Activated CD4-positive, alpha-beta T cell treated with anti-CD3 and anti-CD28 coated beads, Interleukin-2, amount 10 ng/mL, durations not matched to agents 24 days and 14 days (primary cell): ENCODE measurements at regions of chr1 and their contacts with region 1.

Region 1: DNA sequence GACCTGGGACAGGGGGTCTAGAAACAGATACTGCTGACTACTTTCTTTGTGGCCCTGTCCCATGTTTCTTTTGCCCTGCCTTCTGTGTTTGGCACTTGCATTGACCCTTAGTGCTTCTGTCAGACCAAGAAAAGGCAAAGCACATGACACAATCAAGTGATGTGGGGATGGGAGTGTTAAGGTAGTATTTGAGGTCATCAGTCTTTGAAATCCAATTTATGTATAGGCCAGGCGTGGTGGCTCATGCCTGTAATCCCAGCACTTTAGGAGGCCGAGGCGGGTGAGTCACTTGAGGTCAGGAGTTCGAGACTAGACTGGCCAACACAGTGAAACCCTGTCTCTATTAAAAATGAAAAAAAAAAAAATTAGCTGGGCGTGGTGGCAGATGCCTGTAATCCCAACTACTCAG is 26.0 kb downstream of the SERBP1 start:
- DNase-seq: no peak
- H3K4me3 Mint-ChIP-seq: no peak overlapping the region
- H3K27ac Mint-ChIP-seq: no peak overlapping the region
- H3K4me1 Mint-ChIP-seq: peaks cover 12% of the 10 kb centered on the region
- H3K27me3 Mint-ChIP-seq: no peaks in the 10 kb centered on the region

Region 2: DNA sequence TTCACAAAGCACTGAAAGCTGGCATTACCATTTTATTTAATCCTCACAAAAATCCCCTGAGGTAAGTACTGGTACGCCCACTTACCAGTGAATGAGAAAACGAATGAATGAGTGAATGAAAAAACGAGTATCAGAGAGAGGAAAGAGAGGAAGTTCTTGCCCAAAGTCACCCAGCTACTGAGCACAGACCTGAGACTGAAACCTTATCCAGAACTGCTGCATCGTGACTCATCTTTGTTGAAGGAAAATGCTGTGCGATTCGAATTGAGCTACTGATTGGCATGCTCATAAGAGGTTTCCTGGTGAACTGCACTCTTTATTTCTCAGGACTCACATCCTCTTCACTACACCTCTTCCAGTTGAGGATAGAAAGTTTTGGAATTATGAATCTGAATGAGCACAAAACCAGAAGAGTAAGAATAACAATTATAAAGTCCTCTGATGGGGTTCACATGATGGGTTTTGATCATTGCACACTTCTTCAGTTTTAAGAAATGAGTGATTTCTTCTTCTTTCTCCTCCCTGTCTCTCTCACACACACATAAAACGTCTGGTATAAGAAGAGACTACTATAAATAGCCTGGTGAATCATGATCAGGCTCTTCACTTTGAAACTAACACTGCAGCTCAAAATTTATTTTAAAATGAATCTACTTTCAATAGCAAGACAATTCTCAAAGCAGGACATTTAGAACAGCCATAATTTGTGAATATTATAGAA is 64.4 kb before region 1 on chr1:
- intact Hi-C with region 1: loop called (anchors 1 kb)
- DNase-seq: peak; percentile 85
- H3K4me3 Mint-ChIP-seq: peak overlapping the region; percentile 68
- H3K27ac Mint-ChIP-seq: peak overlapping the region; percentile 94
- H3K4me1 Mint-ChIP-seq: peaks cover 77% of the 10 kb centered on the region
- H3K27me3 Mint-ChIP-seq: no peaks in the 10 kb centered on the region

Region 3: GRCh38 chr1:67350783-67351182 is 53.4 kb before region 1 on chr1:
- intact Hi-C with region 1: loop called (anchors 5 kb)
- DNase-seq: peak; percentile 79
- H3K4me3 Mint-ChIP-seq: peak overlapping the region; percentile 49
- H3K27ac Mint-ChIP-seq: peak overlapping the region; percentile 72
- H3K4me1 Mint-ChIP-seq: peaks cover 41% of the 10 kb centered on the region
- H3K27me3 Mint-ChIP-seq: no peaks in the 10 kb centered on the region

Region 4: DNA sequence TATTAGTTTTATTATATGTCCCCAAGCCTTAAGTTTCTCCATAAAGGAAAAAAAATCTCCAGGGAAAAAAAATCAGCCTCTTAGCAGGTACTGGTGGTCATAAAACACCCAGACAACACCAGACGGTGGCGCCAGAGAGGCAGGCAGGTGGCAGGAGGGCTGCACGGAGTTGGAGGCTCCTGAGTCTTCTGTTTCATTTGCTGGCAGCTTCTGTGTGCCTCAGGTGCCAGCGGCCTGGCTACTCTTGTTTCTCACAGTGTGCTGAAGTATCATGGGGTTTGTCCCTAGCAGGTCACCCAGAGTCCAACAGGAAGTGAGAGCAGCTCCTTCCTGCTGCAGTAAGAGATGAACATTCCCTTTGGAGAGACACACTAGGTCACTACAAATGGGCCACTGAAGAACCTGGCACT is 157.5 kb after region 1 on chr1:
- intact Hi-C with region 1: no loop called
- DNase-seq: peak; percentile 94
- H3K4me3 Mint-ChIP-seq: no peak overlapping the region
- H3K27ac Mint-ChIP-seq: no peak overlapping the region
- H3K4me1 Mint-ChIP-seq: peaks cover 6% of the 10 kb centered on the region
- H3K27me3 Mint-ChIP-seq: peaks cover 8% of the 10 kb centered on the region